ENCODE measurements at regions of chr10 and their contacts with region 1.

Region 1: DNA sequence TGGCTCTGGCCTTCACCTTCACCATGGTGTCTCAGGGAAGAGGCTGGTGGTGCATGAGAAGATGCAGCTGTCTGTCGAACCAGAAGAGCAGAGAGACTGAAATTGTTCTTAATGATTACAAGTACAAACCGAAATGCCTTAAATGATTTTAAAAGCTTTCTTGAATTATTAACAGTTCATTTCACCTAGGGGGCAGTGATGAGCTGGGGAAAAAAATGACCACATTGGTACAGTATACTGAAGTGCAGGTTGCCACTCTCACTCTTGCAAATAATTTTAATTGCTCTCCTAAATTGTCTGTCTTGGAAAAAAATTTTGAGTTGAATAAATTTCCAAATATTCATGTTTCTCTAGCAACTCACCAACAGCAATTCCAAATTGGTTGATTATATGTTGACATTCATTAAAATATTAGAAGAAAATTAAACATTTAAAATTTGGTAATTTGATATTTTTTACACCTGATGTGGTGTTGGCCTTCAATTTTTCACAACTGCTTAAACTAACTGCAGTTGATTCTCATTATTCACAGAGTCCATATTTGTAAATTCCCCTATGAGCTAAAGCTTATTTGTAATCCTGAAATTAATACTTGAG is 692.6 kb downstream of the ZWINT start:
- DNase-seq: no peak
- ATAC-seq: no peak
- H3K4me3 ChIP-seq: no peak overlapping the region
- H3K4me3 Mint-ChIP-seq: no peak overlapping the region
- H3K27ac ChIP-seq: no peak overlapping the region
- H3K27ac Mint-ChIP-seq: no peak overlapping the region
- H3K4me1 ChIP-seq: no peaks in the 10 kb centered on the region
- H3K4me1 Mint-ChIP-seq: no peaks in the 10 kb centered on the region
- H3K27me3 ChIP-seq: no peaks in the 10 kb centered on the region
- H3K27me3 Mint-ChIP-seq: no peaks in the 10 kb centered on the region

Region 2: GRCh38 chr10:55653531-55653930 is 14.9 kb before region 1 on chr10:
- CTCF ChIA-PET with region 1: no interaction called
- POLR2A ChIA-PET with region 1: no interaction called
- intact Hi-C with region 1: loop called in 1 of 2 experiments (anchors 1 kb)
- DNase-seq: no peak
- ATAC-seq: no peak
- H3K4me3 ChIP-seq: no peak overlapping the region
- H3K4me3 Mint-ChIP-seq: no peak overlapping the region
- H3K27ac ChIP-seq: no peak overlapping the region
- H3K27ac Mint-ChIP-seq: no peak overlapping the region
- H3K4me1 ChIP-seq: no peaks in the 10 kb centered on the region
- H3K4me1 Mint-ChIP-seq: no peaks in the 10 kb centered on the region
- H3K27me3 ChIP-seq: no peaks in the 10 kb centered on the region
- H3K27me3 Mint-ChIP-seq: no peaks in the 10 kb centered on the region

Measured in naive thymus-derived CD4-positive, alpha-beta T cell (primary cell).